ENCODE measurements at regions of chr9 and their contacts with region 1.

Region 1: DNA sequence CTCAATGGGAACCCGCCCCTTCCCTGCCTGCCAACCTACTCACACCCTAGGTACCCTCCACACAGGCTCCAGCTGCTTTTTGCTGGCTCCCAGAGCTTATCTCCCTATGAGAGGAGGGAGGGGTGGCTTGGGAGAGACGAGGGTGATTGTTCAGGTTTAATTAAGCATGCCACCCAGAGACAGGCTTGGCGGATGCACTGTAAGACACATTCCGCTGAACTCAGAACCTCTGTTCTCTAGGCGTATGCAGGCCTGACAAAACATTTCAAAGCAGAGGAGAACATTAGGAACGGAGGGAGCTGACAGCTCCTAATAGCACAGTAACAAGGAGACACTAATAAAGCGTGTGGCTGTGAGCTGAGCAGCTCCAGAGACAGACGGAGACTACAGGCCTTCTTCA is 80.1 kb downstream of the TRIM32 start:
- DNase-seq: no peak
- ATAC-seq: no peak
- H3K4me3 ChIP-seq: no peak overlapping the region
- H3K27ac ChIP-seq: no peak overlapping the region
- H3K4me1 ChIP-seq: no peaks in the 10 kb centered on the region
- H3K27me3 ChIP-seq: peaks cover 24% of the 10 kb centered on the region
- CTCF ChIP-seq: no peak
- POLR2A ChIP-seq: no peak
- RAD21 ChIP-seq: no peak

Region 2: DNA sequence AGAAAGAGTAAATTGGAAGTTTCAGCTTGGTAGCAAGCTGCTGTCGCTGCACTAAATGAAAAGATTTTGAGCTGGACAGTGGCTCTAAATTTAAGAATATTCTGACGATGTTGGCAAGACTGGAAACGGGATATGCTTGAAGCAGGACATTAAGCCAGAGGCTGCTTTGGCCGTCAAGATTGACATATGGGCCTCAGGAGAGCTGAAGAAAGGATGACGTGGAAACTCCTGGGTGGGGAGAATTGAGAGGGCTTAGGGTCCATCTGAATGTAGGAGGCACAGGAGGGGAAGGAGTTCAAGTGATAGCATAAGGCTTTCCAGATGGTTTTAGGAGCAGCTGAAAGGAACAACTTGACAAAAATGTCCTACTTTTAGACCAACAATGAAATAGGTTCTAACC is 504.8 kb before region 1 on chr9:
- CTCF ChIA-PET with region 1: no interaction called
- POLR2A ChIA-PET with region 1: no interaction called
- RAD21 ChIA-PET with region 1: no interaction called
- intact Hi-C with region 1: no loop called
- DNase-seq: no peak
- ATAC-seq: no peak
- H3K4me3 ChIP-seq: no peak overlapping the region
- H3K27ac ChIP-seq: no peak overlapping the region
- H3K4me1 ChIP-seq: no peaks in the 10 kb centered on the region
- H3K27me3 ChIP-seq: peaks cover 10% of the 10 kb centered on the region; the same call in 1 of the 2 replicates
- CTCF ChIP-seq: no peak
- POLR2A ChIP-seq: no peak
- RAD21 ChIP-seq: no peak

Region 3: GRCh38 chr9:116821633-116822229 is 54.5 kb after region 1 on chr9:
- CTCF ChIA-PET with region 1: no interaction called
- POLR2A ChIA-PET with region 1: no interaction called
- RAD21 ChIA-PET with region 1: no interaction called
- intact Hi-C with region 1: loop called (anchors 10 kb)
- DNase-seq: no peak
- ATAC-seq: no peak
- H3K4me3 ChIP-seq: no peak overlapping the region
- H3K27ac ChIP-seq: no peak overlapping the region
- H3K4me1 ChIP-seq: no peaks in the 10 kb centered on the region
- H3K27me3 ChIP-seq: peaks cover 9% of the 10 kb centered on the region; the same call in 1 of the 2 replicates
- CTCF ChIP-seq: no peak
- POLR2A ChIP-seq: no peak
- RAD21 ChIP-seq: no peak

Region 4: GRCh38 chr9:117103438-117104110 is 336.4 kb after region 1 on chr9:
- CTCF ChIA-PET with region 1: no interaction called
- POLR2A ChIA-PET with region 1: no interaction called
- RAD21 ChIA-PET with region 1: no interaction called
- intact Hi-C with region 1: no loop called
- DNase-seq: no peak
- ATAC-seq: no peak
- H3K4me3 ChIP-seq: no peak overlapping the region
- H3K27ac ChIP-seq: no peak overlapping the region
- H3K4me1 ChIP-seq: no peaks in the 10 kb centered on the region
- H3K27me3 ChIP-seq: no peaks in the 10 kb centered on the region
- CTCF ChIP-seq: no peak
- POLR2A ChIP-seq: no peak
- RAD21 ChIP-seq: no peak

Region 5: GRCh38 chr9:117809751-117810150 is 1042.5 kb after region 1 on chr9:
- CTCF ChIA-PET with region 1: no interaction called
- POLR2A ChIA-PET with region 1: no interaction called
- RAD21 ChIA-PET with region 1: no interaction called
- intact Hi-C with region 1: no loop called
- DNase-seq: no peak
- ATAC-seq: no peak
- H3K4me3 ChIP-seq: no peak overlapping the region
- H3K27ac ChIP-seq: no peak overlapping the region
- H3K4me1 ChIP-seq: no peaks in the 10 kb centered on the region
- H3K27me3 ChIP-seq: no peaks in the 10 kb centered on the region
- CTCF ChIP-seq: no peak
- POLR2A ChIP-seq: no peak
- RAD21 ChIP-seq: no peak